Cardiac septum (tissue), 1 donor: ENCODE measurements at regions of chr2 and their contacts with region 1.

Region 1: DNA sequence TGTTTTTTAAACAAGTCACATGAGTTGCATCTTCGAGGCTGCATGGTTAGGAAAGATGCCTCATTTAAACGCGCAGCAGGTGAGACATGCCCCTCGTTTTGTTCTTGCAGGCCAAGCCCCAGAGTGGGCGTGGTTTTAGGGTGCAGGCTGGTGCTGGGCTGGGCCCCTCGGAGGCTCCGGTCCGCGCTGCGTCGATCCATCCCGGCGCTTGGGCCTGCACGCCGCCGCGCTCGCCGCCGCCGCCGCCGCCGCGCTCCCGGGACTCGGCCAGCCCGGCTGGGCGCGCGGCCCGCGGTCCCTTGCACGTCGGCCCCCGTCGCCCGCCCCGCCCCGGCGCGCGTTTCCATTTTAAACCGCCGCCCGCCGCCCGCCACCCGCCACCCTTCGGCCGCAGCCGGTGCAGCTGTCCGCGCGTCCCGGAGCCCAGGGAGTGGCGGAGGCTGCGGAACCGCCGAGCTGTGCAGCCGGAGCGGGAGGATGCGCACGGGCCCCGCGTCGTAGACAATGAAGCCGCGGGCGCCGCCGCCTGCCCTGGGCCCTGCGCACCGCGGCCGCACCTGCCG is 175.5 kb downstream of the AGAP1 start:
- DNase-seq: peak; percentile 77

Region 2: GRCh38 chr2:235135990-235136561 is 533.3 kb before region 1 on chr2:
- intact Hi-C with region 1: loop called (anchors 10 kb)
- DNase-seq: peak; percentile 87